SK-N-SH (cell line): ENCODE measurements at regions of chr1 and their contacts with region 1.

Region 1: GRCh38 chr1:110495926-110496600 is 22.9 kb downstream of the KCNA10 start:
- DNase-seq: peak; percentile 86
- H3K4me3 ChIP-seq: no peak overlapping the region; a peak in 1 of 4 replicates
- H3K27ac ChIP-seq: no peak overlapping the region
- H3K4me1 ChIP-seq: no peaks in the 10 kb centered on the region
- H3K27me3 ChIP-seq: no peaks in the 10 kb centered on the region; the same call in 1 of the 2 replicates
- CTCF ChIP-seq: peak; percentile 97
- EP300 ChIP-seq: no peak
- RAD21 ChIP-seq: peak; percentile 97

Region 2: GRCh38 chr1:109823543-109824348 is 672.3 kb before region 1 on chr1:
- CTCF ChIA-PET with region 1: no interaction called
- POLR2A ChIA-PET with region 1: no interaction called
- DNase-seq: no peak
- H3K4me3 ChIP-seq: no peak overlapping the region
- H3K27ac ChIP-seq: no peak overlapping the region
- H3K4me1 ChIP-seq: peaks cover 2 to 21% of the 10 kb centered on the region in 2 experiments; a peak in 3 of 4 replicates
- H3K27me3 ChIP-seq: no peaks in the 10 kb centered on the region
- CTCF ChIP-seq: no peak
- EP300 ChIP-seq: no peak
- RAD21 ChIP-seq: no peak

Region 3: GRCh38 chr1:110209715-110210603 is 286.1 kb before region 1 on chr1 and contains the start of gene KCNC4:
- CTCF ChIA-PET with region 1: interaction called, 162 read pairs
- POLR2A ChIA-PET with region 1: no interaction called
- DNase-seq: peak; percentile 88
- H3K4me3 ChIP-seq: peak within 1 kb of the TSS; percentile 54
- H3K27ac ChIP-seq: no peak within 1 kb of the TSS; a peak in 1 of 4 replicates
- H3K4me1 ChIP-seq: peaks cover 0 to 57% of the 10 kb centered on the region in 2 experiments; a peak in 2 of 4 replicates
- H3K27me3 ChIP-seq: peaks cover 23% of the 10 kb centered on the region
- CTCF ChIP-seq: no peak
- EP300 ChIP-seq: no peak
- RAD21 ChIP-seq: no peak
- polyA plus RNA-seq, gene KCNC4: 0.37 and 0.51 TPM in 2 replicates

Region 4: GRCh38 chr1:110380672-110381283 is 115.3 kb before region 1 on chr1:
- CTCF ChIA-PET with region 1: interaction called, 11 read pairs
- POLR2A ChIA-PET with region 1: no interaction called
- DNase-seq: no peak
- H3K4me3 ChIP-seq: no peak overlapping the region
- H3K27ac ChIP-seq: no peak overlapping the region
- H3K4me1 ChIP-seq: no peaks in the 10 kb centered on the region
- H3K27me3 ChIP-seq: no peaks in the 10 kb centered on the region
- CTCF ChIP-seq: no peak
- EP300 ChIP-seq: no peak
- RAD21 ChIP-seq: no peak

Region 5: GRCh38 chr1:110433803-110434202 is 62.3 kb before region 1 on chr1:
- CTCF ChIA-PET with region 1: interaction called, 19 read pairs
- POLR2A ChIA-PET with region 1: no interaction called
- DNase-seq: no peak
- H3K4me3 ChIP-seq: no peak overlapping the region
- H3K27ac ChIP-seq: no peak overlapping the region
- H3K4me1 ChIP-seq: no peaks in the 10 kb centered on the region; a peak in 1 of 4 replicates
- H3K27me3 ChIP-seq: peaks cover 35% of the 10 kb centered on the region
- CTCF ChIP-seq: no peak
- EP300 ChIP-seq: no peak
- RAD21 ChIP-seq: no peak

Region 6: GRCh38 chr1:110477041-110477440 is 19.0 kb before region 1 on chr1:
- CTCF ChIA-PET with region 1: interaction called, 132 read pairs
- POLR2A ChIA-PET with region 1: no interaction called
- DNase-seq: no peak
- H3K4me3 ChIP-seq: no peak overlapping the region
- H3K27ac ChIP-seq: peak overlapping the region in 1 of 2 experiments; percentile 28; a peak in 1 of 4 replicates
- H3K4me1 ChIP-seq: peaks cover 2 to 15% of the 10 kb centered on the region in 2 experiments; a peak in 2 of 4 replicates
- H3K27me3 ChIP-seq: no peaks in the 10 kb centered on the region
- CTCF ChIP-seq: no peak
- EP300 ChIP-seq: peak in 1 of 2 experiments; percentile 40; a peak in 1 of 4 replicates
- RAD21 ChIP-seq: no peak

Region 7: GRCh38 chr1:110565565-110565964 is 69.5 kb after region 1 on chr1:
- CTCF ChIA-PET with region 1: interaction called, 10 read pairs
- POLR2A ChIA-PET with region 1: no interaction called
- DNase-seq: no peak
- H3K4me3 ChIP-seq: no peak overlapping the region
- H3K27ac ChIP-seq: no peak overlapping the region
- H3K4me1 ChIP-seq: no peaks in the 10 kb centered on the region; a peak in 1 of 4 replicates
- H3K27me3 ChIP-seq: no peaks in the 10 kb centered on the region
- CTCF ChIP-seq: no peak
- EP300 ChIP-seq: no peak
- RAD21 ChIP-seq: no peak

Region 8: DNA sequence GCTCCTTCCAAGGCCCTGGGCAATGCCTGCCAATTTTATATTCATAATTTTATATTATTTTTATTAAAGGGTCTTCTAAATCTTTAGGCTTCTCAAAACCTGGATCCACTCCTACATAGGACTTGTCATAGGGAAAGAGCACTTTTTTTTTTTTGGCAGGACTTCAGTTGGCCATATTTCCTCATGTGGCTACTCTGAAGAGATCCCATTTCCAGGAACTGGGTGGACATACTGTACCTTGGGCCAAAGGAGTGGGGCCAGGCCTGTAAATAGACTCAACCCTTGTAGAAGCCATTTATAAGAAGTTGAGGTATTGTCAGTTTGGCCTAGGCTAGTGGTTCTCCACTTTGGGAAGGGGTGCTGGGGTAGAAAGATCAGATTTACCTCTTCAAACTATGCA is 275.6 kb after region 1 on chr1:
- CTCF ChIA-PET with region 1: no interaction called
- POLR2A ChIA-PET with region 1: no interaction called
- DNase-seq: no peak
- H3K4me3 ChIP-seq: no peak overlapping the region
- H3K27ac ChIP-seq: no peak overlapping the region
- H3K4me1 ChIP-seq: no peaks in the 10 kb centered on the region
- H3K27me3 ChIP-seq: no peaks in the 10 kb centered on the region; the same call in 1 of the 2 replicates
- CTCF ChIP-seq: no peak
- EP300 ChIP-seq: no peak
- RAD21 ChIP-seq: no peak